ENCODE measurements at regions of chr9 and their contacts with region 1.

Region 1: GRCh38 chr9:99819856-99820684 is 1.6 kb upstream of the NR4A3 start:
- DNase-seq: peak; percentile 96

Region 2: DNA sequence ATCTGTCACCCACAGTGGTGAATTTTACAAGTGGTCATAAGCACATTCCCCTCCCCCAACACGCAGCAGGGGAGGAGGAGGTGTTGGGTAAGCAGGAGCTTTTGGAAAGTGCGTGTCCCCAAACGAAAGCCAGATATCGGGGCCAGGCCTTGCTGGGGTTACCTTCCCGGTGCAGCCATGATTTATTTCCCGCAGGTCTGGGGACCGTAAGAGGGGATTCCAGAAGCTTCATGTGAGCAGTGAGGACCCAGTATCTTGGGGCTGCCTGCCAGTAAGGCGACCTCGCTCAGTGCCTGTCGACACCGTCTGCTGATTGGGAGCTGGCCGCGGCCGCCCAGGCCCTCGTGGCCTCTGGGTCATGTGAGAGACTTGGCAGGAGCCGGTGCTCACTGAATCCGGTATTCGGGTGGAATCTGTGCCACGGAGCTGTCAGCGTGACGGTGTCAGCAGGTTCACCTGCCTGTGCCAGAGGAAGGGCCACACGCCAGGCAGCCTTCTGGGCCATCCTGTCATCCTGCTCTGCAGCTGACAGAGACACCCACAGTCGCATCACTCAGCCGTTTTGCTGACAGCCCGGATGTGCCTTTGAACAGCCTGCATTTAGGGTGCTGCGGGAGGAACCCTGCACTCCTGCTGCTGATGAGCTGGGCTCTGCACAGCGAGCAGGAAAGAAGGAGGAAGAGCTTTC is 560.7 kb before region 1 on chr9:
- intact Hi-C with region 1: loop called (anchors 1 kb)
- DNase-seq: peak; percentile 94

Region 3: GRCh38 chr9:99357575-99357974 is 462.5 kb before region 1 on chr9:
- intact Hi-C with region 1: loop called (anchors 1 kb)
- DNase-seq: peak; percentile 84

Region 4: GRCh38 chr9:99445371-99445891 is 374.6 kb before region 1 on chr9:
- intact Hi-C with region 1: loop called (anchors 1 kb)
- DNase-seq: peak; percentile 90

Region 5: GRCh38 chr9:99563364-99563763 is 256.7 kb before region 1 on chr9:
- intact Hi-C with region 1: loop called (anchors 5 kb)
- DNase-seq: no peak

Region 6: GRCh38 chr9:99666571-99666970 is 153.5 kb before region 1 on chr9:
- intact Hi-C with region 1: no loop called
- DNase-seq: no peak

Region 7: DNA sequence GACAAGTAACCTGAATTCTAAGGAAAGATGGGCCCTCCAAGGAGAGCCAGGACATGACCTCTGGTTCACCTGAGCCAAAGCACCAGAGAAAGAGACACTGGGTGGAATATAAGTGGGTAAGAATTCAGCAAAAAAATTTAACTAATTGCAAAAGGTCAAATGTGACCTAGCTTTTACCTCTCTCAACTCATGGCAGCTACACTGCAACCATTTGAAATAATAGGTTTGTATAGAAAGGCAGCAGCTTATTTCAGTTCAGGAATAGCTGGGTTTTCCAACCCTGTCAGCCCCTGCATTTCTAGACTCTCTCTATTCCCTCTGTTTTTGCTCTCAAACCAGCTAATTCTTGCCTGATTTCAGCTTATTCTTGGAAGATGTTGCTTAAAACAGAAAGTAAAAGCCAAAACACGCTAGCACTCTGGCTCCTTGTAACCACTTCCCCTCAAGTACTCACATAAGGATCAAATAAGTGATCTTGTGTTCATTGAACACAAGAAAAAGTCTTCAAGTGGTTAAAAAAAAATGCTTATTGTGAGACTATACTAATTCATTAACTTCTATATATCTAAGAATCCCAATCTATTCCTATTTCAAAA is 99.5 kb before region 1 on chr9:
- intact Hi-C with region 1: no loop called
- DNase-seq: no peak

Region 8: GRCh38 chr9:99906403-99907207 is 86.5 kb after region 1 on chr9 and contains the start of gene STX17:
- intact Hi-C with region 1: loop called (anchors 2 kb)
- DNase-seq: peak; percentile 91
- total RNA-seq, gene STX17: 27.1 TPM

Region 9: GRCh38 chr9:100426530-100427428 is 606.7 kb after region 1 on chr9 and contains the start of gene MSANTD3:
- intact Hi-C with region 1: loop called (anchors 10 kb)
- DNase-seq: peak; percentile 81
- total RNA-seq, gene MSANTD3: 32.3 TPM

Measured in cardiac septum (tissue), 1 donor.